ENCODE measurements at regions of chr13 and their contacts with region 1.

Region 1: DNA sequence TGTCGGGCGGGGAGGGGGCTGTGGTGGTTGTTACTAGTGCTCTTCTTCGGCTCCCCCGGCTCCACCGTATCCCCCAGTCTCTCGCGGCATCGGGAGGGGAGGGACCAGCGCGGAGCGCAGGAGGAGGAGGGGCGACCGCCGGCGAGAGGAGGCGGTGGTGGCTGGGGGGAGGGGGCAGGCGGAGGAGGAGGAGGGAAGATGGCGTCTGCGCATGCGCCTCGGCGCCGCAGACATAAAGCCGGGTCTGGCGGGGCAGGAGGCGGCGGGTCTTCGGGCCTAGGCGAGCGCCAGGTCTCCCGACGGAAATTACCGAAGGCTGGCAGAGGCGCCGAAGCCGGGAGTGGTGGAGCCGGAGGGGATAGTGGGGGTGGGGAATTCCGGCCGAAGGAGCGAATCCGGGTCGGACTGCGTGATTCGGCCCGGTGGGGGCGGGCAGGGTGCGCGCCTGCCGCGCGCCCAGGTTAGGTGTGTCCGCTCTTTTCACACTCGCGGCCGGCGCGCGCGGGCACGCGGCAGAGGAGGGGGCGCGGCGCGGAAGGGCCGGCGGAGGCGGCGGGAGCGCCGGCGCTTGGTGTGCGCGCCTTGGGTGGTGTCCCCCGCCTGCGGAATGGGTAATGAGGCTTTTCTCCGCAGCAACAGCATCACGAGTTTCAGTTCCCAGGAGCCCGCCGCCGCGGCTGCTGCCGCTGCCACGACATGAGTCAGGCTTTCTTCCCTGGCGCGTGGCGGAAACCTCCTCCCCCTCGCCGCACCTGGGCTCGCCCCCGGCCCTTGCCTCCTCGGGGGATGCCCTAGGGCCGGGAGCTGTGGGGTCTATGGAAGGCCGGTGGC is 1.3 kb upstream of the TSC22D1 start:
- DNase-seq: peak; percentile 84 to 97
- H3K4me3 ChIP-seq: peak overlapping the region; percentile 66 to 97
- H3K27ac ChIP-seq: peak overlapping the region; percentile 98
- H3K4me1 ChIP-seq: peaks cover 10 to 21% of the 10 kb centered on the region in 2 donors
- H3K27me3 ChIP-seq: no peaks in the 10 kb centered on the region
- CTCF ChIP-seq: peak in 1 of 3 experiments; percentile 20

Region 2: GRCh38 chr13:44484562-44485138 is 92.8 kb before region 1 on chr13:
- intact Hi-C with region 1: loop called (anchors 2 kb)
- DNase-seq: no peak
- H3K4me3 ChIP-seq: peak overlapping the region in 1 of 2 donors; percentile 27
- H3K27ac ChIP-seq: no peak overlapping the region
- H3K4me1 ChIP-seq: peaks cover 0 to 15% of the 10 kb centered on the region in 2 donors
- H3K27me3 ChIP-seq: no peaks in the 10 kb centered on the region
- CTCF ChIP-seq: no peak

Region 3: DNA sequence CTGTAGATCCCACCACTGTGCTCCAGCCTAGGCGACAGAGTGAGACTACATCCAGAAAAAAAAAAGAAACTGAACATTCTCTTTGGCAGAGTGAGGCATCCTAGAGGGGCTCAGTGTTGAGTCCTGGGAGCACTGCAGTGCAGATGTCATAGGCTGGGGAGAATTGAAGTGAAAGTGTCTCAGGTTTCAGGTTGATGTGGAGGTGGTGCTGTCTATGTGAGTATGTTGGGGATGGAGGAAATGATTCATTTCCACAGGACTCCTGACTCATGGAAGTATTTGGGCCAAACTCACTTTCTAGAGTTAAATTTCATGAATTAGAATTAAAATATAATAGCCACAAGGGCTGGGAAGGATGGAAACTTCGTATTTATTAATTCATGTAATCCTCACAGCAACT is 133.1 kb after region 1 on chr13:
- intact Hi-C with region 1: loop called (anchors 5 kb)
- DNase-seq: no peak
- H3K4me3 ChIP-seq: no peak overlapping the region
- H3K27ac ChIP-seq: peak overlapping the region; percentile 74 to 88
- H3K4me1 ChIP-seq: peaks cover 0 to 50% of the 10 kb centered on the region in 2 donors
- H3K27me3 ChIP-seq: no peaks in the 10 kb centered on the region
- CTCF ChIP-seq: no peak

Region 4: DNA sequence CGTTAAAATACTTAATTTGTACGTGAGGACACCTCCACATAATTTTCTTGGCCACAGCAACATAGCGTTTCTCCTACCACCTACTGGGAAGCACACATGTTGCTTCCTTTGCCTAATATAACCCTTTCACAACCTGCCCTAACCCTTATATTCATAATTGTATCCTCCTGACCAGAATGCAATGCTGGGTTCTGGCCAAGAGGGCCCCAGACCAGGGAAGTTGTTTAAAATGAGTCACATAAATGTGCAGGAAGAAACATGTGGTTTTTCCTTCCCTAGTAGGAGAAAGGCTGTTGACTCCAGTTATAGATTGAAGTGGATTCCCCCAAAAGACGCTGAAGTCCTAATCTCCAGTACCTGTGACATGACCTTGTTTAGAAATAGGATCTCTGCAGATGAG is 224.5 kb after region 1 on chr13:
- intact Hi-C with region 1: no loop called
- DNase-seq: no peak
- H3K4me3 ChIP-seq: no peak overlapping the region
- H3K27ac ChIP-seq: no peak overlapping the region
- H3K4me1 ChIP-seq: peaks cover 0 to 3% of the 10 kb centered on the region in 2 donors
- H3K27me3 ChIP-seq: no peaks in the 10 kb centered on the region
- CTCF ChIP-seq: no peak

Region 5: DNA sequence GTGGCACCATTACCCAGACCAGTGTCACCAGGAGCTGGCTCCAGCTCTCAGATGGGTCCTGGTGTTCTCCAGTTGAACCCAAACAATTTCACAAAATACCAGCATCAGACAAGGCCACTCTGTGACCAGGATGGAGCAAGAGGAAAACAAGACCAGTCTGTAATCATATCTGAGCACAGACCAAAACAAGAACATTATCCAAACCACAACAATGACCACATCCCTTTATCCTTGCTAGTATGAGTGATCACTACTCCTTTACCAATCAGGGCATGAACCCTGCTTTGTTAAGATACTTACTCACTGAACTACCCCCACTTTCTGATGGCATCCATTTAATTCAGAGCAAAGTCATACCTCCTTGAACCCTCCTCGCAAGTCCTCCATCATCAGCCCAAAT is 266.0 kb after region 1 on chr13:
- intact Hi-C with region 1: loop called (anchors 10 kb)
- DNase-seq: no peak
- H3K4me3 ChIP-seq: no peak overlapping the region
- H3K27ac ChIP-seq: peak overlapping the region; percentile 76 to 81
- H3K4me1 ChIP-seq: peaks cover 0 to 22% of the 10 kb centered on the region in 2 donors
- H3K27me3 ChIP-seq: no peaks in the 10 kb centered on the region
- CTCF ChIP-seq: no peak

Region 6: DNA sequence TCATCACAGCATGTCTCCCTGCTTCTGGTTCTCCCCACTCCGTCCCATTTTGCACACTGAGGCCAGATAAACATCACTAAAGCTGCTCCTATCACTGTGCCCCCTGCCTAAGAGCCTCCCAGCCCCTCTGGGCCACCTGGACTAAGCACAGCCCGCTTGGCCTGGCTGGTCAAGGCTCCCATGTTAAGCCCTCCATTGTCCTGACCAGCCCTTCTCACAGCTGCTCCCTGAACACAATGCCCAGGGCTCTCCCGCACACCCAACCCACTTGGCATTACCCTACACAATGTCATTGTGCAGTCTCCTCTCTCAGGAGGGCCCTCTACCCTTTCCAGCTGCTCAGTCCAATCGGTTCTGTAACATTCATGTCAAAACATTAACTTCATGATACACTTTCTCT is 278.4 kb after region 1 on chr13:
- intact Hi-C with region 1: no loop called
- DNase-seq: no peak
- H3K4me3 ChIP-seq: no peak overlapping the region
- H3K27ac ChIP-seq: no peak overlapping the region
- H3K4me1 ChIP-seq: no peaks in the 10 kb centered on the region
- H3K27me3 ChIP-seq: no peaks in the 10 kb centered on the region
- CTCF ChIP-seq: no peak

Region 7: GRCh38 chr13:44969551-44970484 is 392.4 kb after region 1 on chr13:
- intact Hi-C with region 1: loop called (anchors 2 kb)
- DNase-seq: no peak
- H3K4me3 ChIP-seq: peak overlapping the region in 1 of 2 donors; percentile 8
- H3K27ac ChIP-seq: peak overlapping the region; percentile 35 to 62
- H3K4me1 ChIP-seq: peaks cover 0 to 12% of the 10 kb centered on the region in 2 donors
- H3K27me3 ChIP-seq: no peaks in the 10 kb centered on the region
- CTCF ChIP-seq: peak; percentile 79 to 83 (median 79)

Measured in ascending aorta (tissue), 2 donors.